ENCODE measurements at regions of chr17 and their contacts with region 1.

Region 1: GRCh38 chr17:65027305-65027704 is 29.2 kb downstream of the GNA13 start:
- DNase-seq: peak; percentile 72
- H3K4me3 Mint-ChIP-seq: no peak overlapping the region
- H3K27ac Mint-ChIP-seq: peak overlapping the region; percentile 42
- H3K4me1 Mint-ChIP-seq: peaks cover 38% of the 10 kb centered on the region
- H3K27me3 Mint-ChIP-seq: no peaks in the 10 kb centered on the region
- CTCF ChIP-seq: peak; percentile 36

Region 2: GRCh38 chr17:64448665-64449512 is 578.4 kb before region 1 on chr17 and contains the start of gene MILR1:
- CTCF ChIA-PET with region 1: no interaction called
- POLR2A ChIA-PET with region 1: no interaction called
- intact Hi-C with region 1: no loop called
- DNase-seq: peak; percentile 78
- H3K4me3 Mint-ChIP-seq: peak within 1 kb of the TSS; percentile 46
- H3K27ac Mint-ChIP-seq: peak within 1 kb of the TSS; percentile 63
- H3K4me1 Mint-ChIP-seq: no peaks in the 10 kb centered on the region
- H3K27me3 Mint-ChIP-seq: no peaks in the 10 kb centered on the region
- CTCF ChIP-seq: no peak
- total RNA-seq, gene MILR1: 9.8 and 15.8 TPM in 2 replicates

Region 3: GRCh38 chr17:65047942-65048341 is 20.6 kb after region 1 on chr17:
- CTCF ChIA-PET with region 1: interaction called, 5 read pairs
- POLR2A ChIA-PET with region 1: interaction called, 13 read pairs
- intact Hi-C with region 1: no loop called
- DNase-seq: no peak
- H3K4me3 Mint-ChIP-seq: no peak overlapping the region
- H3K27ac Mint-ChIP-seq: no peak overlapping the region
- H3K4me1 Mint-ChIP-seq: peaks cover 27% of the 10 kb centered on the region
- H3K27me3 Mint-ChIP-seq: no peaks in the 10 kb centered on the region
- CTCF ChIP-seq: no peak